ENCODE measurements at regions of chr16 and their contacts with region 1.

Region 1: GRCh38 chr16:53892155-53892554 is 188.2 kb downstream of the FTO start:
- DNase-seq: peak; percentile 77
- H3K4me3 Mint-ChIP-seq: no peak overlapping the region
- H3K27ac Mint-ChIP-seq: no peak overlapping the region
- H3K4me1 Mint-ChIP-seq: peaks cover 16% of the 10 kb centered on the region
- H3K27me3 Mint-ChIP-seq: no peaks in the 10 kb centered on the region
- CTCF ChIP-seq: peak; percentile 67

Region 2: DNA sequence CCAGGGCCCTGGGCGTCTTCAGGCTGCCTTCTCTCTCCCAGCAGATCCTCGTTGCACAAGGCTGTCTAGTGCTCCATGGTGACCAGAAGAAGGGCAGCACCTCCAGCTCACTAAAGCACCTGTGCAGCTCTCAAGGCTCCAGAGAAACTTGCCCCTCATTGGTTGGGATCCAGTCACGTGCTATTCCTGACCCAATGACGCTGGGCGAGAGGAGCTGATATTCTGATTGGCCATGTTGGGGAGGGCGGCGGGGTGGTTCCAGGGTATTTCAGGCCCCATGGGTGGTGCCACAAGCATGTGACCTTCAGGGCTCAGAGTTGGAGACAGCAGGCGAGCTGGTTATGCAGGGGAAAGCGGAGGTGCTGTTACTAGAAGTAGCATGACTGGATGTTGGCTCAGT is 1654.3 kb before region 1 on chr16:
- CTCF ChIA-PET with region 1: no interaction called
- POLR2A ChIA-PET with region 1: no interaction called
- intact Hi-C with region 1: no loop called
- DNase-seq: no peak
- H3K4me3 Mint-ChIP-seq: no peak overlapping the region
- H3K27ac Mint-ChIP-seq: no peak overlapping the region
- H3K4me1 Mint-ChIP-seq: no peaks in the 10 kb centered on the region
- H3K27me3 Mint-ChIP-seq: no peaks in the 10 kb centered on the region
- CTCF ChIP-seq: no peak

Region 3: DNA sequence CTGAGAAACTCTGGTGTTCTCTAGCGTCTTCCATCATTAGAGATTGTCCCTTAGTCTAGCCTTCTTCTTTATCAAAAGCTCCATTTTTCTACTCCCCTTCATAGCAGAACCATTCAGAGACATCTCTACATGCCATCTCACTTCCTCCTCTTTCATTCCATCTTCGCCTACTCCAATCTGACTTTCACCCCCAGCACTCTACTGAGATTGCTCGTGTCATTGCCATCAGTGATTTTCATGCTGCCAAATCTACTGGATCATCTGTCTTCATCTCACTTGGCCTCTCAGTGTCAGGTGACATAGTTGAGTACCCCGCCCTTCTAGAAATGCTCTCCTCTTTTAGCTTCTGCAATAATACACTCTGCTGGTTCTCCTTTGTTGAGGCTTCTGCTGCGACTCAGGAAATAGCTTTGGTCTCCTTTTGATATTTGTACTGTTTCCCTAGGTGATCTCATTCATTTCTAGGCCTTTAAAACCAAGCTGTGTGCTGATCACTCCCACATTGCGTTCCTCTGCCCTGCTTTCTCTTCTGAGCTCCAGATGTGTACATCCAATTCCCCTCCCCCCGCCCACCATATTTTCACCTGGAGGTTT is 69.1 kb before region 1 on chr16:
- CTCF ChIA-PET with region 1: no interaction called
- POLR2A ChIA-PET with region 1: no interaction called
- intact Hi-C with region 1: no loop called
- DNase-seq: no peak
- H3K4me3 Mint-ChIP-seq: no peak overlapping the region
- H3K27ac Mint-ChIP-seq: no peak overlapping the region
- H3K4me1 Mint-ChIP-seq: peaks cover 6% of the 10 kb centered on the region
- H3K27me3 Mint-ChIP-seq: no peaks in the 10 kb centered on the region
- CTCF ChIP-seq: no peak

Region 4: DNA sequence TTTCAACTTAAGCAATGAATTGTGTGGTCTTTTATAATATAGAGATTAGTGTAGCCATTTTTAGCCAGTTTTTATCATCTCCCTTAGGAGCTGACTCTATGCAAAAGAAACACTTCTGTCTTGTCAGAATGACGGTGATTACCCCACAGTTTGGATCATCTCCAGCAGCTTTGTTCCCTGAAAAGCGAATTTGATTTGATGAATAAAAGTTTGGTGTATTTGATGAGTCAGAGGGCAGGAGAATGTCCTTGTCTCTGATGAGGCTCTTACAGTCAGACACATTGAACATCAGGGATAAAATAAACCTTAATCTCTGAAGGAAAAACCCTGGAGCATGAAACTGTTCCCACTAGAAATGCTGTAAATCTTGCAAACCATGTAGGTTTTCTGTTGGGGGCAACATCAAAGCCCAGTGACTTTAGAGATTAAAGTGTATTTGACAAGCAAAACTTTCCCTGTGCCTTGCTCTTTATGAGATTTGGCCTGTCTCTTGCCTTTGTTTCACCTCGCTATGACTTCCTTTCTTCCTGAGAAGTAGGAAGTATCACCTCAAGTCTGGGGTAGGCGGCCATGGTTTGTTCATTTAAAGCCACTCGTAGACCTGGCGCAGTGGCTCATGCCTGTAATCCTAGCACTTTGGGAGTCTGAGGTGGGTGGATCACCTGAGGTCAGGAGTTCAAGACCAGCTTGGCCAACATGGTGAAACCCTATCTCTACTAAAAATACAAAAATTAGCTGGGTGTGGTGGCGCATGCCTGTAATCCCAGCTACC is 21.1 kb after region 1 on chr16:
- CTCF ChIA-PET with region 1: interaction called, 4 read pairs
- POLR2A ChIA-PET with region 1: interaction called, 17 read pairs
- intact Hi-C with region 1: no loop called
- DNase-seq: peak; percentile 97
- H3K4me3 Mint-ChIP-seq: no peak overlapping the region
- H3K27ac Mint-ChIP-seq: peak overlapping the region; percentile 35
- H3K4me1 Mint-ChIP-seq: peaks cover 16% of the 10 kb centered on the region
- H3K27me3 Mint-ChIP-seq: no peaks in the 10 kb centered on the region
- CTCF ChIP-seq: no peak

Region 5: GRCh38 chr16:53974484-53975100 is 82.4 kb after region 1 on chr16:
- CTCF ChIA-PET with region 1: no interaction called
- POLR2A ChIA-PET with region 1: no interaction called
- intact Hi-C with region 1: no loop called
- DNase-seq: peak; percentile 47
- H3K4me3 Mint-ChIP-seq: no peak overlapping the region
- H3K27ac Mint-ChIP-seq: no peak overlapping the region
- H3K4me1 Mint-ChIP-seq: no peaks in the 10 kb centered on the region
- H3K27me3 Mint-ChIP-seq: no peaks in the 10 kb centered on the region
- CTCF ChIP-seq: no peak

Region 6: DNA sequence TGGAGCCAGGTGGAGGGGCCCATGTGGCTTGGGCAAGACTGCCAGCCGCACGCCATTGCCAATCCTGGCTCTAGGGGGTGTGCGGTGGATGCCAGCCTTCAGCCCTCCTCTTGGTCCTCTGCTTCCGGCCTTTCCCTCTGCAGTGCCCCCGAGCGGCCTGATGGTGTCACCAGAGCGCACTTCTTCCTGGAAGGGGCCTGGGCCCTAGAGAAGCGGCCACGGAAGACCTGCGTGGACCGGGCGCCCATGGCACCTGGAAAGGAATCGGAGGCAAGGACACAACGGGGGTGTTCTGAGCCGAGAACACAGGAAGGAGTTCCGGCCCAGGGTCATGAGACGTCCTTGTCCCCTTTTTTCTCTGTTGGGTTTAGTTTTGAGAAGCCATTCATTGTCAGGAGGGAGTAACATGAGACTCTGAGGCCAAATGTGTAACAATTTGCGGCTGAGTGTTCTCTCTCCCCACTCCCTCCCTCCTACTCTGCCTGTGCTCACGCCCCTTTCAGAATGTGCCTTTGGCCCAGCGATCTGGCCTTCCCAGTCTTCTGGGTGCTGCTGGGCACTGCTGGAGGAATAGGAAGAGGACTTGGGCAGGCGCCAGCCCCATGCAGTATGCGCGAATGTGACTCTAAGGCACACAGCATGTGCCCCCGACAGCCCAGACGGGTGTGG is 301.6 kb after region 1 on chr16:
- CTCF ChIA-PET with region 1: no interaction called
- POLR2A ChIA-PET with region 1: no interaction called
- intact Hi-C with region 1: loop called (anchors 10 kb)
- DNase-seq: peak; percentile 86
- H3K4me3 Mint-ChIP-seq: peak overlapping the region; percentile 55
- H3K27ac Mint-ChIP-seq: peak overlapping the region; percentile 90
- H3K4me1 Mint-ChIP-seq: peaks cover 5% of the 10 kb centered on the region
- H3K27me3 Mint-ChIP-seq: no peaks in the 10 kb centered on the region
- CTCF ChIP-seq: peak; percentile 83

Region 7: DNA sequence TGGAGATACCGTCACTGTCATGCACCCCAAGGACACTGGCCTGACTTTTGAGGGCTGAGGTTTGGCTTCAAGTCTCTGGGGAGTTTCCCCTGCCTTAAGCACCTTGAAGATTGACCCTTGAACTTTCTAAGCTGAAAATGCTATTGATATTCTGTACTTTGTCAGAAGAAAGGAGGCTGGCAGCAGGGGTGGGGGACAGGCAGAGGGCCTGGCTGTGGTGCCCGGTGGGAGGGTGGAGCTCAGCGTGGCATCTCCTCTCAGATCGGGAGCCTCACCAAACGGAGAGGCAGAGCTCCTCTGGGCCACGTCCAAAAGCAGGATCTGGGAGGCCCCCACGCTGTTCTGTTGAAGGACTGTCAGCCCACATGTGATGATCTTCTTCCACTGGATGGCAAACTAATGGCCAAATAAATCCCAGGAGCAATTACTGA is 699.7 kb after region 1 on chr16:
- CTCF ChIA-PET with region 1: no interaction called
- POLR2A ChIA-PET with region 1: no interaction called
- intact Hi-C with region 1: no loop called
- DNase-seq: no peak
- H3K4me3 Mint-ChIP-seq: no peak overlapping the region
- H3K27ac Mint-ChIP-seq: no peak overlapping the region
- H3K4me1 Mint-ChIP-seq: no peaks in the 10 kb centered on the region
- H3K27me3 Mint-ChIP-seq: peaks cover 14% of the 10 kb centered on the region
- CTCF ChIP-seq: no peak

Region 8: DNA sequence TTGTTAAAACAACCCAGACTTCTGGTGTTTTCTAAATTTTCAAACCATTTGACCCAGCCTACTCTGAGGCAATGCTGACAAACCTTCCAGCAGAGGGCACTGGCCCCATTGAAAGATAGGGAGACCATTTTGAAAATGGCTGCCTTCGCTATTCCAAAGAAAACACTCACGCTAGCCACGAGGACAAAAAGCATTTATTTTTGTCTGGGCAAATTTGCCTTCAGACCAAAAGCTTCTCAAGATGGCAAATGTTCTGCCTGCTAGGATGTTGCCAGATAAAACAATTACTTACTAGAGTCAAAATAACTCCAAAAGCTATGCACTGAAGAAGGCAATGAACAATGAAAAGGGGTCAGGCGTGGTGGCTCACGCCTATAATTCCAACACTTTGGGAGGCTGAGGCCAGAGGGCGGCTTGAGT is 741.8 kb after region 1 on chr16:
- CTCF ChIA-PET with region 1: no interaction called
- POLR2A ChIA-PET with region 1: no interaction called
- intact Hi-C with region 1: loop called (anchors 5 kb)
- DNase-seq: peak; percentile 78
- H3K4me3 Mint-ChIP-seq: no peak overlapping the region
- H3K27ac Mint-ChIP-seq: no peak overlapping the region
- H3K4me1 Mint-ChIP-seq: peaks cover 8% of the 10 kb centered on the region
- H3K27me3 Mint-ChIP-seq: no peaks in the 10 kb centered on the region
- CTCF ChIP-seq: peak; percentile 76